Vagina (tissue), 2 donors: ENCODE measurements at regions of chr4 and their contacts with region 1.

Region 1: DNA sequence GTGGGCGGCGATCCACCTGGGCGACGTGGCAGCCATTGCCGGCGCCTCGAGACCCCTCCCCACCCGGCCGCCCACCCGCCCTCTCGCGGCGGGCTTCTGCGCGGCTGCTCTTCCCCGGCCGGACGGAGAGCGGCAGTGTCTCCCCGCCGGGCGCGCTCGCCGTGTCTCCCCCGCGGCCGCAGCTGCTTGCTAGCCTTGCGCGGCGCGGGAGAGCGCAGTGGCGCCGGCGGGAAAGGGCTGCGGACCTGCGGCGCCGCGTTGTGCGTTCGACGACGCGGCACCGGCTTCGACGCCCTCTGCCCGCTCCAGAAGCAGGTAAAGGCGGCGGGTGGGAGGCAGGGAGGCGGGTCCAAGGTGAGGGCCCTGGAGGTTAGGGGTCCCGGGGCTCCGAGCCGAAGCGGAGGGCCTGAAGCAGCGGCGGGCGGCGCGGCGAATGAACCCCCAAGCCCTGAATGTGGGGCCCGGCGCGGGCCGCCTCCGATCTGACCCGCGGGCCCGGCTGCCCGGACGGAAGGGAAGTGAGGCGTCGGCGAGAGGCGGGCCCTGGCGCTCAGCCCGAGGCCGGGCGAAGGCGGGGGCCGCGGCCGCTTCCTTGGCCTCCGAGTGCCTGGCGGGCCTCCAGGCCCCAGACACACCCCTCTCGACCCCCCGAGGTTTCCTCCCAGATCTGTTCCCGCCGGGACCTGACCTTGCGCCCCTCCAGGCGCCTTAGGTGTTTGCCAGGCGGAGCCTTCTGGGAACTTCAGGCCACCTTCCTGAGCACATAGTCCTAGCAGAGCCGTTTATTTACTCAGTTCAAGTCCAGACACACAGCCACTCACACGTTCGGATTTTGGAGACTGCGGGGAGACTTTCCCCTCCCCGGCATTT is at the start of gene N4BP2:
- DNase-seq: peak in 1 of 2 donors; percentile 94
- H3K4me3 ChIP-seq: peak within 1 kb of the TSS; percentile 90 to 93
- H3K27ac ChIP-seq: peak within 1 kb of the TSS; percentile 100
- H3K4me1 ChIP-seq: peaks cover 29% of the 10 kb centered on the region
- H3K27me3 ChIP-seq: no peaks in the 10 kb centered on the region
- CTCF ChIP-seq: peak; percentile 7 to 89 (median 54)
- POLR2A ChIP-seq: peak in 1 of 2 donors; percentile 88
- total RNA-seq, gene N4BP2: 7.4 TPM

Region 2: GRCh38 chr4:39502019-39502663 is 554.8 kb before region 1 on chr4:
- intact Hi-C with region 1: no loop called
- DNase-seq: no peak
- H3K4me3 ChIP-seq: no peak overlapping the region
- H3K27ac ChIP-seq: no peak overlapping the region
- H3K4me1 ChIP-seq: no peaks in the 10 kb centered on the region
- H3K27me3 ChIP-seq: no peaks in the 10 kb centered on the region
- CTCF ChIP-seq: no peak
- POLR2A ChIP-seq: no peak

Region 3: DNA sequence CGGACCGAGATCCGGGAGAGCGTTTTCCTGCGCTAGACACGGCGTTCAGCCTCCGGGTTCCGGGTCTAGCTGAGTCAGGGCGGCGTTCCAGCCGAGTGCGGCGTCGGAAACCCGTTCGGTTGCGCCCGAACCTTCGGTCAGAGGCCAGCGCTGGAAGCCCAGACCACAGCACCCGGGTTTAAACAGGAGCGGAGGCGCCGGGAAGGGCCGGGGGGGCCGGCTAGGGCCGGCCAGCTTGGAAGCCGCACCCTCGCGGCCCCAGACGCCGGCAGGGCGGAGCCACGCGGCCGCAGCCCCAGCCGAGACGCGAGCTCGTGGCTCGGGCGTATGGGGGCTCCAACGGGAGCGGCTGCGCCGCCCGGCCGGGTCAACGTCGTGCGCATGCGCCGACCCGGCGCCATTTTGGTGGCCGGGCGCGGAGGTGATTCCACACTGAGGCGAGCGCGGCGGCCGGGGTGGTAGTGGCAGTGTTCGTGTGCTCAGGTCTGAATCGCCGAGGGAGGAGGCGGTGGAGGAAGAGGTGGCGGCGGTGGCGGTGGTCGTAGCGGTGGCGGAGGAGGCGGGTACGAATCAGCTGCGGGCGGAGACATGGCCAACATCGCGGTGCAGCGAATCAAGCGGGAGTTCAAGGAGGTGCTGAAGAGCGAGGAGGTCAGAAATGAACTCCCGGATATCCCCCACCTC is 359.1 kb before region 1 on chr4 and contains the start of gene UBE2K:
- intact Hi-C with region 1: loop called (anchors 5 kb)
- DNase-seq: peak in 1 of 2 donors; percentile 90
- H3K4me3 ChIP-seq: peak within 1 kb of the TSS; percentile 71 to 85
- H3K27ac ChIP-seq: peak within 1 kb of the TSS; percentile 98
- H3K4me1 ChIP-seq: peaks cover 51% of the 10 kb centered on the region
- H3K27me3 ChIP-seq: no peaks in the 10 kb centered on the region
- CTCF ChIP-seq: peak in 1 of 3 experiments; percentile 27
- POLR2A ChIP-seq: peak in 1 of 2 donors; percentile 85
- total RNA-seq, gene UBE2K: 21.4 TPM

Region 4: DNA sequence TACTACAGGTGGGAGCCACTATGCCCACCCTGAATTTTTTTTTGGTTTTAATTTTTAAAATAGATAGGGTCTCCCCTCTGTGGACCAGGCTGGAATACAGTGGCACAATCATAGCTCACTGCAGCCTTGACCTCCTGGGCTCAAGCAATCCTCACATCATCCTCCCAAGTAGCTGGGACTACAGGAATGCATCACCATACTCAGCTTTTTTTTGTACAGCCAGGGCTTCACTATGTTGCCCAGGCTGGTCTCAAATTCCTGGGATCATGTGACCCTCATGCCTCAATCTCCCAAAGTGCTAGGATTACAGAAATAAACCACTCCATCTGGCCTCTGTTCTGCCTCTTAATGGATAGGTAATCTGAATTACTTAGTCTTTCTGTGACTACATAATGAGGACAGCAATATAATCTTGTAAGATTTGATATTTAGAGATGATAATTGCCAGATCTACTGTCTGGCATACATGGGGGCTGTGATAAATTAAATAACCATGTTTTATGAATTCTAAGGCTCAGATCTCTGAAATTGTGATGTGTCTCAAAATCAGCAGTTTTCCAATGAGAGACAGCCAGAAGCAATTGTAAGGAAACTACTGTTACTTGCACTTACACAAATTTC is 106.0 kb before region 1 on chr4:
- intact Hi-C with region 1: no loop called
- DNase-seq: no peak
- H3K4me3 ChIP-seq: no peak overlapping the region
- H3K27ac ChIP-seq: no peak overlapping the region
- H3K4me1 ChIP-seq: peaks cover 19% of the 10 kb centered on the region
- H3K27me3 ChIP-seq: no peaks in the 10 kb centered on the region
- CTCF ChIP-seq: no peak
- POLR2A ChIP-seq: no peak

Region 5: DNA sequence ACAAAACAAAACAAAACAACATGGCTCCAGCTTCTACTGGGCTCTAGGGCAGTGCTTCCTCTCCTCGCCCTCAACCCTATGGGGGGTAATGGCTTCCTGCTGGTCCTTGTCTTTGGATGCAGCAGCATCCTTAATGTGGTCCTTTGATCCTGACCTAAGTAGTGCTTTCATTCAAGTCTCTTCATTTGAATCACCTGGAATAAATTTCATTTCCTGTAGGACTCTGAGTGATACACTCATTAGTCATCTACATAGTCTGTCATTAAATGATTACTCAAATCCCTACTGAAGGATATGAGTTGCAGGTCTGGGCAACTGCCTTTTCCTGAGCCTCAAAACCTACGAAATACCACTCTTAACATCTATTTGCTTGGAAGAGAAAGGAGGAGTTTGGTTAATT is 194.4 kb after region 1 on chr4:
- intact Hi-C with region 1: no loop called
- DNase-seq: no peak
- H3K4me3 ChIP-seq: no peak overlapping the region
- H3K27ac ChIP-seq: no peak overlapping the region
- H3K4me1 ChIP-seq: peaks cover 18% of the 10 kb centered on the region
- H3K27me3 ChIP-seq: no peaks in the 10 kb centered on the region
- CTCF ChIP-seq: no peak
- POLR2A ChIP-seq: no peak

Region 6: DNA sequence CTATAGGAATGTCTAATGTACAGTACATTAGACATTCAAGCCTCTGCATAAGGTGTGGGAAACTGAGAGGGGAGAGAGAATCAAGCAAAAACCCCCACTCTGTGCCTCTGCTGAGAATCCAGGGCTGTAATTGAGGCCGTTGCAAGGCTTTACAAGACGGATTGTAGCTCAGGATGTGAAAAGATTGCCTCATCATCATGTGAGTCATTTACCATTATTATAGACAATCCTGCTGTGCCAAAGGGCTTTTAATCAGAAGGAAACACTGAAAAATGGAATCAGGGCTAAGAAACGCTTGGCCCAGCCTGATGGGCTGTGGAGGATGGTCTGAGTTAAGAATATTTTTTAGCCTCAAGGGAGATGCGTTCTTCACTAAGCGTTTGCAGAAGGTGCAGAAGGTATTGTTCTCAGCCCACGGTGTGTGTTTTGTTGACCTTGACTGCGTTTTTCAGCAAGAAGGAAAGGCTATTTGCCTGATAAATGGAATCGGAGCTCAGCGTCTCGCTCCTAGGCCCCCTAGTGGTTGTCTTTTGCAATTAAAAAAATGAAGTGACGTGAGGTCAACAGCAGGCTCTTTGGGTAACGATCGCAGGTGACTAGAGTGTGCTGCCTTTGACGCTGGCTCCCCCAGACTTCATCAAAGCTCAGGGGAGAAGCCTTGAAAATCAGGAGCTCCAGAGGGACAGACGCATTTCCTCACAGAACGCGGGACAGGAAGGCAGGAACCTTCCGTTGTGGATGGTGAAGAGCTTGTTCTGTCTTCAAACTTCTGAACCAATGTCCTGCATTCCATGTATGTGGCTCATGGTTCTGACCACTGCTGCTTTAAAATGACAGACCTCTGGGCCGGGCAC is 260.1 kb after region 1 on chr4:
- intact Hi-C with region 1: loop called (anchors 10 kb)
- DNase-seq: no peak
- H3K4me3 ChIP-seq: peak overlapping the region; percentile 25 to 39
- H3K27ac ChIP-seq: peak overlapping the region; percentile 85
- H3K4me1 ChIP-seq: peaks cover 19% of the 10 kb centered on the region
- H3K27me3 ChIP-seq: no peaks in the 10 kb centered on the region
- CTCF ChIP-seq: peak; percentile 55 to 78 (median 74)
- POLR2A ChIP-seq: no peak